GM23248 (cell line): ENCODE measurements at regions of chr18 and their contacts with region 1.

Region 1: DNA sequence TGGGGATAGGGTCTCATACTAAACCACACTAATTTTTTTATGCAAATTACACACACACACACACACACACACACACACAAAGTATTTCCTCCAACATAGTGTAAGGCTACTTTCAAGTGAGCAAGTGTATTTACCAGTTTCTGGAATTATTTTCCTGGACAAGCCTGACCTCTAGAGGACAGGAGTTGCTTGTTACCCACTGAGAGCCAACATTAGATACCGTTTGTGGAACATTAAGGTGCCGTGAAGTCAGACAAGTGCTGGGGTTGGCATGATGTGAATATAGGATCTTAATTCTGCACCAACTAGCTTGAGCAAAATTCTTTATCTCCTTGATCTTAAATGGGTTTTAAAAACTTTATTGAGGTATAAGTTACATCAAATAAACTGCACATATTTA is 39.3 kb upstream of the SERPINB2 start:
- DNase-seq: peak; percentile 76
- H3K4me3 ChIP-seq: no peak overlapping the region
- H3K27ac ChIP-seq: no peak overlapping the region
- H3K4me1 ChIP-seq: no peaks in the 10 kb centered on the region
- H3K27me3 ChIP-seq: no peaks in the 10 kb centered on the region

Region 2: DNA sequence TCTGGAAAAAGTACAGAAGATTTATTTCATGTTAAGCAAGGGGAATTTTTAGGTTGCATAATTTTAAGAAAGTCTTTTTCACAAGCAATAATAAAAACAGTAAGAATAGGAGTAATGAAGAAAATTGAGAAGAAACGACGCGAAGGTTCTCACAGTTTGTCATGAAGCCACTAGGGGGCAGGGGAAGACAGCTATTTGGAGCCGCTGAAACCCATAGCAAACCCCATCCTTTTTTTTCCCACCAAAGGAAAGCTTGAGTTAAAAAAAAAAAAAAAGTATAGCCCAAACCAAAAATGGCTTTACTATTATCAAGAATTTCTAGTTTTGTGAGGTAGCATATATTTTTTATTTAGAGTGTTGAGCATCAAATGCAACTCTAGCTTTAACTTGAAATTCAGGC is 831.9 kb before region 1 on chr18:
- in situ Hi-C with region 1: loop called (anchors 25 kb)
- DNase-seq: peak; percentile 82
- H3K4me3 ChIP-seq: no peak overlapping the region
- H3K27ac ChIP-seq: no peak overlapping the region
- H3K4me1 ChIP-seq: no peaks in the 10 kb centered on the region
- H3K27me3 ChIP-seq: peaks cover 31% of the 10 kb centered on the region; the same call in 1 of the 2 replicates

Region 3: GRCh38 chr18:63367053-63367953 is 480.9 kb before region 1 on chr18 and contains the start of gene KDSR:
- in situ Hi-C with region 1: loop called (anchors 25 kb)
- DNase-seq: peak; percentile 100
- H3K4me3 ChIP-seq: peak within 1 kb of the TSS; percentile 99
- H3K27ac ChIP-seq: peak within 1 kb of the TSS; percentile 91
- H3K4me1 ChIP-seq: peaks cover 21% of the 10 kb centered on the region; the same call in 1 of the 2 replicates
- H3K27me3 ChIP-seq: no peaks in the 10 kb centered on the region
- total RNA-seq, gene KDSR: 30.7 and 31.2 TPM in 2 replicates

Region 4: DNA sequence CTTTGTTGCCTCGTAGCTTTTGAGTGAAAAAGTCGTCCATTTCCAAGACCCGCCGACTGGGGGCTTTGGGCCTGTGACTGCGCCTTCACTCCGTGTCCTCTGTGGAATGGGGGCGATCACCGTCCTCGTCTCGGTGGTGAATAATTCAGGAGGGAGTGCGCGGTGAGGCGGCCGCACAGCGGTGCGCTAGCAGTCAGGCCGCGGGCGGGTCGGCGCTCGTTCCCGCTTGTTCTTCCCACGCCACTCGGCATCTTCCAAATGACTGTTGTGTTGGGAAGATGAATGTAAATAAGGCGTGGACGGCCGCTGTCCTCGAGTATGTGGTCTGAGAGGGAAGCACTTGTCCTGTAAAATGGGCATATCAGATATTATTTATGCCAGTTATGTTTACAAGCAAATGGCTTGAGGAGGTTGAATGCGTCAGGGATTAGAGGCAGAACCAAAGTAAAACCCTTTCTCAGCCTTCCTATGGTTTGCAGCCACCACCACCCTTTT is 425.3 kb before region 1 on chr18:
- in situ Hi-C with region 1: no loop called
- DNase-seq: peak; percentile 81
- H3K4me3 ChIP-seq: peak overlapping the region; percentile 93
- H3K27ac ChIP-seq: peak overlapping the region; percentile 93
- H3K4me1 ChIP-seq: peaks cover 10% of the 10 kb centered on the region
- H3K27me3 ChIP-seq: no peaks in the 10 kb centered on the region

Region 5: DNA sequence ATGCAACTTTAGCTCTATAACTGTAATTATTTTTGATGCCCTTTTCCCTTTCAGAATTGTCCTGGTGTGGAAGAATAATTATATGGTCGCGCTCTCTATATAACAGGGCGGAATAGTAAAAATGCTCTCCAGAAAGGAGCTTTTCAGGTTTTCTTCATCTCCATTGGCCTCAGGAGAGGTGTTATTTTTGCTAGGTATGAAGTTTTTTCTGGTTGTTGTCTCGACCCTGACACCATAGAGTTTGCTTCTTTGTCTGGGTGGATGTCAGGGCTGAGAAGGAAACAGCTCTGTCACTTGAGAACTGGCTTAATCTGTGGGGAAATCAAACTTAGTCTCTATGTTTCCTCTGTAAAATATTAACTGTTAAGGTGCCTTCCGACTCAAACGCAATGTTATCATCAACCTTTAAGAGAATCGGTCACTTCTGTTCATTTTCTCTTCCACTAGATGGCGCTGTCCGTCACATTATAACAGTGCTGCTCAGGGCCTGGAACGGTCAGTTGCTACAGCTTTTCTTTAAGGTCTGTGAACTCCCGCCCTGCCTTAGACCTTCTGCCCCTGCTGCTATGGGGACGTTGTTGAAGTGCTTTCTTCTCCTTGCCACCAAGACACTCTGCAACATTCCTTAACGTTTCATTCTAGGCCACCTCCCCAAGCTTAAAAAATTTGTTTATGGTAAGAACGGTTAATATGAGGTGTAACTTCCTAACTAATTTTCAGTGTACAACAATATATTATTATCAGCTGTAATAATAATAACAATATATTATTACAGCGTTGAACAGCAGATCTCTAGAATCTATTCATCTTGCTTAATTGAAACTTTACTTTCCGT is 329.8 kb before region 1 on chr18:
- in situ Hi-C with region 1: loop called (anchors 5 kb)
- DNase-seq: peak; percentile 85
- H3K4me3 ChIP-seq: 0 out of 2 replicates have a peak overlapping the region, but pooled peaks have one; percentile 30
- H3K27ac ChIP-seq: no peak overlapping the region
- H3K4me1 ChIP-seq: no peaks in the 10 kb centered on the region
- H3K27me3 ChIP-seq: no peaks in the 10 kb centered on the region

Region 6: DNA sequence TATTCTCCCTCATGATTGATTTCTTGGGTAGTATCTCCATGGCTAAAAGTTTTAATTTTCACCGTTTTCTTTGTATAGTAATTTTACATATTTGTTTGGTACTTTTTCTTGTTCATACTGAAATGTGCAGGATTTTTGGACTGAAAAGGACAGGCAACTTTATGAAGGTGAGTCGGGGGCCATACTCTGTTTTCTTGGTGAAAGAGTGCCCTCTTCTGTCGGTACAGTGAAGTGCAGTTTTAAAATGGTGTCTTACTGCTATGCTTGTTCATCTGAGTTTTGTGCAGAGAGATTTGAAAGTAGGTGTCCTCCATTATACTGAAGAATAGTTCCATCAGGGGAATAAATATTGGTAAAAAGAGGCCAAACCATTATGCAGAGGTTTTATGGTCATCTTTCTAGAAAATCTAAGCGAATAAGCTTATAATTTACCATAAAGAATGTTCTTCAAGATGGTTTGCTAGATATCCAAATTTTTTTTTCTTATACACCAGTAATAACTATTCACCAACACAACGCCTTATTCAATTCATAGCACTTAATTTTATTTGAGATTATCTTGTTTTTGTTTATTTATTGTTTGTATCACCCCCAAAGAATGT is 269.7 kb before region 1 on chr18:
- in situ Hi-C with region 1: loop called (anchors 25 kb)
- DNase-seq: peak; percentile 54
- H3K4me3 ChIP-seq: no peak overlapping the region
- H3K27ac ChIP-seq: no peak overlapping the region
- H3K4me1 ChIP-seq: no peaks in the 10 kb centered on the region
- H3K27me3 ChIP-seq: no peaks in the 10 kb centered on the region

Region 7: DNA sequence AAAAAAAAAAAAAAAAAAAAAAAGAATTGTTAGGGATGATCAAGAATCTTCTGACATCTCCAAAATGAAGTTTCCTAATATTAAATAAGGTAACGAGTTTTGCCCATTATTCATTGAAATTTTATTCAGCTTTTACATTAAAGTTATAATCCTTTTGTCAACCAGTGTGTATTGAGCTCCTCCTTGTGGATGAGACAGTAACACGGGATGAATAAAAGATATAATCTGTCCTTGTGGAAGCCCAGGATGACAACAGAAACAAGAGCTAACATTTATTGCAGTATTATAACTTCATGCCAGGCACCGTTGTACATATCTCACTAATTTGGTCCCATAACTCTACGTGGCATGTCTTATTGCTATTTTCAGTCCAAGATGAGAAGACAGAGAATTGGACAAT is 106.4 kb before region 1 on chr18:
- in situ Hi-C with region 1: loop called (anchors 10 kb)
- DNase-seq: peak; percentile 72
- H3K4me3 ChIP-seq: no peak overlapping the region
- H3K27ac ChIP-seq: no peak overlapping the region
- H3K4me1 ChIP-seq: peaks cover 7% of the 10 kb centered on the region
- H3K27me3 ChIP-seq: no peaks in the 10 kb centered on the region

Region 8: GRCh38 chr18:63936156-63936931 is 88.2 kb after region 1 on chr18:
- in situ Hi-C with region 1: loop called (anchors 10 kb)
- DNase-seq: peak; percentile 92
- H3K4me3 ChIP-seq: peak overlapping the region; percentile 86
- H3K27ac ChIP-seq: no peak overlapping the region
- H3K4me1 ChIP-seq: no peaks in the 10 kb centered on the region
- H3K27me3 ChIP-seq: no peaks in the 10 kb centered on the region

Region 9: DNA sequence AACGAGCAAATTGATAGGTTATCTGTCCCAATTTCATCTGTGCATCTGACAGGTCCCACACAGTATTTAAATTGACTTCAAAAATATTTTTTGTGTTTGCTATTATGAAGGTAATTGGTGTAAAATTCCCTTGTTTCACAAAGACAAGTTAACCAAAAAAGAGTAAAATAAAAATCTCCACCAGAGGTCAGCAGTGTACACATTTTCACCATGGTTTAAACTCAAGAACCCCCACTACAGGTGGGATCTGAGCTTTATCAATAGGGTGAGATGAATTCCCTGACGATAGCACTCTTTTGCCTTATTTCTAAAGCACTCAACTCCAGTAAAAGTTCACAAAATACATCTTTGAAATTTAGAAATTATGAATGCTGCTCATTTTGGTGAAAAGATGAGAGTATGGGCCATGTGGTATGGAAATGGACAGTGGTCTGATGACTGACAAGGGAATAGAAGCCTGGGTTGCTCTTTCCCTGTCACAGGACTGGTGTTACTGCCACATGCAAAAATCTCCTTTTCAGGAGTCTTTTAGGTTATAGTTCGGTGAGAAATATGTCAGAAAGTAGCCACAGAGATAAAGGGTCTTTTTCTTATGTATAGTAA is 189.8 kb after region 1 on chr18:
- in situ Hi-C with region 1: no loop called
- DNase-seq: peak; percentile 15
- H3K4me3 ChIP-seq: no peak overlapping the region
- H3K27ac ChIP-seq: no peak overlapping the region
- H3K4me1 ChIP-seq: no peaks in the 10 kb centered on the region
- H3K27me3 ChIP-seq: no peaks in the 10 kb centered on the region; the same call in 1 of the 2 replicates

Region 10: DNA sequence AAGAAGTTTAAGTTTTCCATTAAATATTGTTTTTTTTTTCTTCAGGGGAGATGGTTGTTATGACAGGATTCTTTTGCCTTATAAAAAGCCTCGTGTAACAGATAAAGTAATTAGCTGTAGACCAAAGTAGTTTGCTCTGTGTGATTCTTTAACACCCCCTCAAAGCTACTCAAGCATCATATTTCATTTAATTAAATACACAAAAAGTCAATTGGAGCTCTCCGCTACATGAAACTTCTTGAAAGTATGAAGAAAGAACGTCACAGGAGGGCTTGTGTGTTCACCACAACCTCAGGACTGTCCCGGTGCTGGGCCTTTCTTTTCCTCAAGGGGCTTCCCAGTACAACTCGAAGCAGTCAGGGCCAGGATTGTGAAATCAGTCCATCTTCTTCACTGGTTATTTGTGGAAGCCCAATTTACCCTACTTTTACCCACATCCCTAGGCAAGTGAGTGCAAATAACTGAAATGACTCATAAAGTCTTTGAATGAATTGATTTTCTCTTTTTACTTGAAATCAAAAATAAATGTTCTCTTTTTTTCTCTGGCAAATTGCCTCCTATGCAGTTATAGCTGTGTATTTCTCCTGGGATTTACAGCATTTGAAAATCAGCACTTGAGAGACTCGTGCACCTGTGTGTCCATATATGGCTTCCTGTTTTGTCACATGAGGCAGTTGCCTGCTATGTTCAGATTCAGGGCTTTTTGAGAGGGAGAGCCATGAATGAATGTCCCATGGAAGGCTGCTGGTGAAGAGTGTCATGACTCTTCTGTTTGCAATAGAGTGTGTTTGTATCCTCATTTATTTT is 252.2 kb after region 1 on chr18:
- in situ Hi-C with region 1: no loop called
- DNase-seq: no peak
- H3K4me3 ChIP-seq: no peak overlapping the region
- H3K27ac ChIP-seq: no peak overlapping the region
- H3K4me1 ChIP-seq: no peaks in the 10 kb centered on the region
- H3K27me3 ChIP-seq: peaks cover 4% of the 10 kb centered on the region